ENCODE measurements at regions of chr17 and their contacts with region 1.

Region 1: GRCh38 chr17:51371732-51372151 is 111.4 kb downstream of the UTP18 start:
- DNase-seq: peak; percentile 77
- H3K4me3 ChIP-seq: peak overlapping the region; percentile 67
- H3K27ac ChIP-seq: peak overlapping the region; percentile 39
- H3K4me1 ChIP-seq: peaks cover 9% of the 10 kb centered on the region
- CTCF ChIP-seq: peak; percentile 85

Region 2: GRCh38 chr17:51200295-51200694 is 171.4 kb before region 1 on chr17:
- CTCF ChIA-PET with region 1: no interaction called
- POLR2A ChIA-PET with region 1: no interaction called
- intact Hi-C with region 1: no loop called
- DNase-seq: no peak
- H3K4me3 ChIP-seq: no peak overlapping the region
- H3K27ac ChIP-seq: no peak overlapping the region
- H3K4me1 ChIP-seq: no peaks in the 10 kb centered on the region
- CTCF ChIP-seq: no peak

Region 3: DNA sequence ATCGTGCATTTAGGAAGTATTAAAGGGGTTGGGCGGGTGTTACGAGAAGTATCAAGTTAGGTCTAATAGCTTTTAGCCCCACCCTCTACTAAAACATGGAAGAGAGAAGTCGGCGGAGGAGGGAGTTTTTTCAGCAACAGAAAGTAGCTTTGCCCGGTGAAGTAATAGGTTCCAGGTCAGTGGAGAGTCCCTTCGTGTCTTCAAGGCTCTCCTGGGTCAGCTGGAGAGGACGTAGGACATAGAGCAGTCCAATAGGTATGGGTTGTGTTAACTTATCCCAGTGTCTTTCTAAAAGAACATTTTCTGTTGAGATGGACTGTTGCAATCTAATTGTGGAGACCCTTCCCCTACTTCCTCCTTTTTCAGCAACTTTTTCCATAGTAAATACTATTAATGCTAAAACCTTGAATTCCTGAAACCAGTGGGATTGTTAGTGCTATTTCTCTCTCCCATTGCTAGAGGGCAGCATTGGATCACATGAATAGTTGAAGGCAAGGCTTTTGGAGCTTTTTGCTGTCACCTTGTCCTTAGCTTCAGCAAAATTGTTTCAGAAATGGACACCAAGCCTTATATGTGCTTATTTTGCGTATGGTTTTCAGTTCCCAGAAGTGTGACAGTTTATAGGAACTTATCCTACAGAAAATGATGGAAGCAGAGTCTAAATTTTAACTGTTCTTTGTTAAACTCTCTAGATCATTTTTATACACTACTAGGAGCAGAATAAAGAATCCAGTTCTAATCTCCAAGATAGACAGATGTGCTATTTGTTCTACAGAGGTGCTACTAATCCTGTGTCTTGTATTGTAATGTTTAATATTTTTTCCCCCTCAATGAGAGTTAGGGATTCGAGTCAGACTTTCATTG is 73.0 kb before region 1 on chr17:
- CTCF ChIA-PET with region 1: no interaction called
- POLR2A ChIA-PET with region 1: no interaction called
- intact Hi-C with region 1: loop called (anchors 2 kb)
- DNase-seq: peak; percentile 55
- H3K4me3 ChIP-seq: no peak overlapping the region
- H3K27ac ChIP-seq: no peak overlapping the region
- H3K4me1 ChIP-seq: no peaks in the 10 kb centered on the region
- CTCF ChIP-seq: peak; percentile 86

Region 4: DNA sequence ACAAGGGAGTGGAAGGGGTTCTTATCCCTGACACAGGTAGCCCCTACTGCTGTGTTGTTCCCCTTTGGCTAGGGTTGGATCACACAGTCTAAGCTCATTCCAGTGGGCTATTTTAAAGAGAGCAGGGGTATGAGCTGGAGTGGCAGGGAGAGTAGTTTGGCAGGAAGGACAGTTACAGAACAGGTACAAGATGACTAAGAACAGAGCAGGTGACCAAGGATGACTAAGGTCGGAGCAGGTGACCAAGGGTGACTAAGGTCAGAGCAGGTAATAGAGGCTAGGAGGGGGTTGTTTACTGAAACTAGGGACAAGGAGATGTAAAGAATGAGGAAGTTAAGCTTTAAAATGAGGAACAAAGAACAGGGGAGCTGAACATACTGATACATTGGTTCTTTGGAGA is 52.6 kb before region 1 on chr17:
- CTCF ChIA-PET with region 1: no interaction called
- POLR2A ChIA-PET with region 1: no interaction called
- intact Hi-C with region 1: no loop called
- DNase-seq: peak; percentile 14
- H3K4me3 ChIP-seq: no peak overlapping the region
- H3K27ac ChIP-seq: no peak overlapping the region
- H3K4me1 ChIP-seq: no peaks in the 10 kb centered on the region
- CTCF ChIP-seq: no peak

Region 5: DNA sequence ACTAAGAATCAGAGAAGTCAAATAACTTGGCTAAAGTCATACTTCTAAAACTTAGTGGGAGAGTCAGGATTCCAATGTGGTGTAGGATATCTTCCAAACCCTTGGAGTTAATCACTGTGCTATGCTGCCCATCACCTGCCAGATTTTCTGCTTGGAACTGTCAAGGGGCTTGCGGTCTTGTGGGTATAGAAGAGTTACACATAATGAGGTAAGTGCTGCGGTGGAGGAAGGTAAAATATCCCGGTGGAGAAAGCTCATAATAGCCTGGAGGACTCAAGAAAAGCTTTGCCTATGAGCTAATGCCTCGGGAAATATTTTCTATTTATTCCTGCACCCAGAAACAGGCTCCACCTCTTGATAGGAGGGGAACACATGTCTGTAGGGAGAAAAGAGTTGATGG is 84.2 kb after region 1 on chr17:
- CTCF ChIA-PET with region 1: no interaction called
- POLR2A ChIA-PET with region 1: no interaction called
- intact Hi-C with region 1: no loop called
- DNase-seq: no peak
- H3K4me3 ChIP-seq: no peak overlapping the region
- H3K27ac ChIP-seq: no peak overlapping the region
- H3K4me1 ChIP-seq: no peaks in the 10 kb centered on the region
- CTCF ChIP-seq: no peak

Region 6: GRCh38 chr17:51537996-51538550 is 166.3 kb after region 1 on chr17:
- CTCF ChIA-PET with region 1: interaction called, 3 read pairs
- POLR2A ChIA-PET with region 1: interaction called, 4 read pairs
- intact Hi-C with region 1: loop called (anchors 1 kb)
- DNase-seq: no peak
- H3K4me3 ChIP-seq: no peak overlapping the region
- H3K27ac ChIP-seq: no peak overlapping the region
- H3K4me1 ChIP-seq: no peaks in the 10 kb centered on the region
- CTCF ChIP-seq: no peak

Region 7: DNA sequence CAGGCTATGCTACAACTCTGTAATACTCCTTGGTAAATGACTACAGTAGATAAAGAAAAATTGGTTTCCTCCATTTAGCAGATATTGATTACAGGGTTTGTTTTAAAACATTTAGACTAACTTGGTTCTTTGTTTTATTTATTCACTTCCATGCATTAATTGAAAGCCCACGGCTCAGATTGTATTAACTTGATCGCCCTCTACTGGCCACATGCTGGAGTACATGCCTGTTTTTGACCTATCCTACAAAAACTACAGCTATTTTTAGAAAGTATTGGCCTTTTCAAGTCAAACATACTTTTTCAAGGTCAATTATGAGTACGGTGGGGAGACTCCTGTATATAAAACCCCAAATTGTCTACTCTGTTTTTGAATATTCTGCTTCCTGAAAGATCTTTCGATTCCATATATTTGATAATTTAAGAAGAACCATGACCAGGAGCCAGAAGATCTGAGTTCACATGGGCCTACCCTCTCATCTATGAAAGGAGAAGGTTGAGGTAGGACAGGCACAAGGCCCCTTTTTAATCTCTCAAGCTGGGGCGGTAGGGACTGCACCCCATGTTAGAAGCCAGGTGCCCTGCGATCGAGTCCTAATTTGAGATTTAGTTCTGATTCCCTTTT is 735.0 kb after region 1 on chr17:
- CTCF ChIA-PET with region 1: no interaction called
- POLR2A ChIA-PET with region 1: no interaction called
- intact Hi-C with region 1: loop called (anchors 2 kb)
- DNase-seq: peak; percentile 43
- H3K4me3 ChIP-seq: no peak overlapping the region
- H3K27ac ChIP-seq: no peak overlapping the region
- H3K4me1 ChIP-seq: no peaks in the 10 kb centered on the region
- CTCF ChIP-seq: peak; percentile 95

Measured in OCI-LY7 (cell line).